Keratinocyte (primary cell): ENCODE measurements at regions of chr1 and their contacts with region 1.

Region 1: GRCh38 chr1:180502360-180503273 is at the start of gene ACBD6:
- DNase-seq: no peak
- H3K4me3 ChIP-seq: peak within 1 kb of the TSS; percentile 83 to 99 (median 98)
- H3K27ac ChIP-seq: peak within 1 kb of the TSS; percentile 93
- H3K4me1 ChIP-seq: peaks cover 24% of the 10 kb centered on the region
- H3K27me3 ChIP-seq: no peaks in the 10 kb centered on the region
- CTCF ChIP-seq: peak; percentile 8 to 24 (median 8)
- polyA plus RNA-seq, gene ACBD6: 47.5 to 53.6 TPM (median 50.5 TPM) in 3 replicates

Region 2: DNA sequence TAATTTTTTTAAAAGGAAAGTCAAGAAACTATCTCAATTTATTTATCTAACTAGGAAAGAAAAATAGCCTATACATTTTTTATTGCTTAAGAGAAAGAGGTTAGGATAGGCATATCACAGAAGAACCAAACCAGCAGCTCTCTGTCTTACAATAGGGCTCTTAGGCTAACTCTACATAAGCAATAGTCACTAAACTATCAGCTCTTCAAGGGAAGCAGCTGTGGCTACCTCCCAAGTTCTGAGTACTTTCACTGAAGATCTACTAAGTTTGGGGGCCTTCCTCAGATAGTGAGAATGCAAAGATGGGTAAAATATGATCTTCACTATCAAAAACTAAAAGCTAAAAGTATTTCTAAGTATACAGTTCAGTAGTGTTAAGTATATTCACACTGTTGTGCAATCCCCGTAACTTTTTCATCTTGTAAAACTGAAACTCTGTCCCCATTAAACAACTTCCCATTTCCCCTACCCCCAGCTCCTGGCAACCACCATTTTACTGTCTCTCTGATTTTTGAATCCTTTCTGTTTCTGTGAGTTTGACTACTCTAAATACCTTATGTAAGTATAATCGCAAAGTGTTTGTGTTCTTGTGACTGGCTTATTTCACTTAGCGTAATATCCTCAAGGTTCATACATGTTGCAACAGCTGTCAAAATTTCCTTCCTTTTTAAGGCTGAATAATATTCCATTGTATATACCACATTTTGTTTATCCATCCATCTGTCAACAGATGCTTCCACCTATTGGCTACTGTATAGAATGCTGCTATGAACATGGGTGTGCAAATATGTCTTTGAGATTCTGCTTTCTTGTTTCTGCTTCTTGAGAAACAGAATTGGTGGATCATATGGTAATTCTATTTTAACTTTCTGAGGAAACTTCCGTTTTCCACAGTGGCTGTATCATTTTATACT is 73.6 kb before region 1 on chr1:
- dilution Hi-C with region 1: no loop called
- DNase-seq: no peak
- H3K4me3 ChIP-seq: no peak overlapping the region
- H3K27ac ChIP-seq: no peak overlapping the region
- H3K4me1 ChIP-seq: peaks cover 6% of the 10 kb centered on the region
- H3K27me3 ChIP-seq: no peaks in the 10 kb centered on the region
- CTCF ChIP-seq: no peak

Region 3: GRCh38 chr1:180863158-180863775 is 360.6 kb after region 1 on chr1:
- dilution Hi-C with region 1: loop called (anchors 25 kb)
- DNase-seq: no peak
- H3K4me3 ChIP-seq: no peak overlapping the region
- H3K27ac ChIP-seq: peak overlapping the region; percentile 13
- H3K4me1 ChIP-seq: peaks cover 6% of the 10 kb centered on the region
- H3K27me3 ChIP-seq: no peaks in the 10 kb centered on the region
- CTCF ChIP-seq: peak in 2 of 3 experiments; percentile 46 to 52